GM18951 (cell line): ENCODE measurements at regions of chr3 and their contacts with region 1.

Region 1: DNA sequence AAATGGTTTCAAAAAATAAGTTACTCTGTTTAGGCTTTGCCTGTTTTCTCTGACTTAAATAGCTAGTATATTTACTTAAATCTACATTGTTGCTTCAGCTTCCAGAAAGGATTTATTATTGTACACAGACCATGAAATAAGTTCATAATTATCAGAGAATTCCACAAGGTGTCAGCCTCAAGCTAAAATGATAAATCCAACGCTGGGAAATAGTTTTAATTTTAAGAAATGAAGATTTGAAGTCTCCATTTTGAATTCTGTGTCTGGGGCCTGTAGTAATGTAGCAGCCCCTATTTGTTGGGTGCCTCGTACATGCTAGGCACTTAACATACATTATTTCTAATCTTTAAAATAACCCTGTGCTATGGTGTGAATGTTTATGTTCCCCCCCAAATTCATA is 92.6 kb upstream of the KCNMB2 start:
- POLR2A ChIP-seq: no peak

Region 2: DNA sequence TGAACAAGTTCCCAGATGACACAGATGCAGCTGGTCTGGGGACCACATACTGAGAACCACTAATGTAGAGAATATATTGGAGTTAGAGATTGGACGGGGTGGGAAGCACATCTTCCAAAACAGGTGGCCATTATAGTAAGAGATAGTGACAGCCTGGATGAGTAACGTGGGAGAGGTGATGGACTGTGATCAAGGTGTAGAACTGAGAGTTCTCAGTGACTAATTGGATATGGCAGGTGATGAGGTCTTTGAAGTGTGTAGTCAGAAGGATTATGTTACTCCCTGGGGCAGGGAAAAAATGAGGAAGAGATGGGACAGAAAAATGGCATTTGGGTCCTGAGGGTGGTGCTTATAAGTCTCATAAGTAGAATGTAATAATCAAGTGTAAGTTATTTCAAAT is 159.2 kb after region 1 on chr3:
- in situ Hi-C with region 1: no loop called
- POLR2A ChIP-seq: no peak

Region 3: GRCh38 chr3:178966299-178967176 is 522.9 kb after region 1 on chr3:
- in situ Hi-C with region 1: loop called (anchors 10 kb)
- POLR2A ChIP-seq: no peak